A549 (cell line): ENCODE measurements at regions of chr21 and their contacts with region 1.

Region 1: GRCh38 chr21:36044056-36044455 is 16.3 kb downstream of the SETD4 start:
- DNase-seq: no peak
- ATAC-seq: no peak
- H3K4me3 ChIP-seq: no peak overlapping the region
- H3K27ac ChIP-seq: no peak overlapping the region
- H3K4me1 ChIP-seq: no peaks in the 10 kb centered on the region
- CTCF ChIP-seq: no peak
- EP300 ChIP-seq: no peak
- POLR2A ChIP-seq: no peak
- RAD21 ChIP-seq: no peak

Region 2: DNA sequence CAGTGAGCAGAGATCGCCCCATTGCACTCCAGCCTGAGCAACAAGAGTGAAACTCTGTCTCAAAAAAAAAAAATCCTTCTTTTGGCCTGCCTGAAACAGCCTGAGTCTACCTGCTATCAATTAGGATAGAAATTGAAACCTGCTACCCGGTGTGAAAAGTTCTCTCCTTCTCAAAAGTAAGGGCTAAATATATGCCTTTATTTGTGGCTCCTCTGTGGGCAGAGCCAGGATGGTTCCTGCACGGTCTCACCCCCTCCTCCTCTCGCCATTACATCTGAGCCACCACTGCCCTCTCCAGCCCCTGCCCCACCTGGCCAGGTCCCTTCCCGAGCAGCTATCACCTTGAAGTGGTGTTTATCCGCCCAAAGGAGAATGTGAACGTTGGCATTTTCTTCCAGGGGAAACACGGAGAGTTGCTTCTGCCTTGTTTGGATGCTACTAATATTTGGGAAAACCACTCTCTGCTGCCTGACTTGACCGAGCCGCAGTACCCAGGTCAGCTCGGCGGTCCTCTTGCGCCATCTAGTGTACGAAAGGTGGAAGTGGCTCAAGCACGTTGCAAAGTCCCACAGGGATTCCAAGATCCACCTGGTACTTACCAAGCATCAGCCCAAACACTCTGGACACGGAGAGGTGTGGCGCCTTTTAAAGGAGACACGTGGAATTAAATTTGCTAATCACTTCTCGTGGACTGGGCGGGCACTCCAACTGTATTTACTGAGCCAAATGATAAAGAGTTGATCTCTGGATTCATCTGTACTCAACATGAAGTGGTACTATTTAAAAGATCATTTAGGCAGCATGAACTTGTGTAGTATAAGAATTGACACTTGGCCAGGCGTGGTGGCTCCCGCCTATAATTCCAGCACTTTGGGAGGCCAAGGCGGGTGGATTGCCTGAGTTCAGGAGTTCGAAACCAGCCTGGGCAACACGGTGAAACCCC is 15.7 kb before region 1 on chr21:
- CTCF ChIA-PET with region 1: interaction called, 10 read pairs
- POLR2A ChIA-PET with region 1: no interaction called
- DNase-seq: peak; percentile 51 to 67
- ATAC-seq: peak; percentile 91 to 97
- H3K4me3 ChIP-seq: no peak overlapping the region
- H3K27ac ChIP-seq: no peak overlapping the region
- H3K4me1 ChIP-seq: no peaks in the 10 kb centered on the region
- CTCF ChIP-seq: peak; percentile 73
- EP300 ChIP-seq: no peak
- POLR2A ChIP-seq: no peak
- RAD21 ChIP-seq: peak; percentile 82 to 85